CD8-positive, alpha-beta T cell (primary cell): ENCODE measurements at regions of chr19 and their contacts with region 1.

Region 1: DNA sequence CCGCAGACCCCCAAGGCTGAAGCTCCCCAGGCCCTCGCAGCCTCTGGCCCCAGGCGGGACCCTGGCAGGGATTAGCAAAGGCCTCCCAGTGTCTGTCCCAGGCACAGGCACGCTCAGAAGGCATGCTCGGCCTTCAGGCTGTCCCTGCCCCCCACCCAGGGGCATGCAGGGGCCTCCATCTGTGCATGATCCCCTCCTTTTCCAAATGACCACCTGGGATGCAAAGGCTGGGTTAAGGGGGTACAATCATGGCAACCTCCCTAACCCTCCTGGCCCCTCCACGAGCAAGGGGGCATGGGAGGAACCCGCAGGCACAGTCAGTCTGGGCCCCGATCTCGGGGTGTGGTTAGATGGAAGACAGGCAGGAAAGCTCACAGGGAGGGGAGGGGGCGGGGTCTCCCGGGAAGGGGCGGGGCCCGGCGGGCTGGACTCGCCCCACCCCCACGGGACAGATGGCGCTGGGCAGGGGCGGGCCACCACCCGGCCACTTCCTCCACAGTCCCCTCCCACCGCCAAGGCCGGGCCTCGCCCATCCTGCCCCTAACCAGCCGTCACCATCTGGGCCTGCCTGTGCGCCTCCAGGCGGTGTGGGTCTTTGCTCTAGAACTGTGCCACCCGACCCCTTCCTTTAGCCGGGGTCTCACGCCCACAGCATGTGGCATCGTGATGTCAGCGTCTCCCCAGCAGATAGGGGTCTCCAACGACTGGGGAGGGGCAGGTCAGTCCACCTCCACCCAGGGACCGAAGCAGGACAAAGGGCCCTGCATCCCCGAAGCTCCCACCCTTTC is 7.0 kb upstream of the REXO1 start:
- DNase-seq: peak; percentile 55 to 92 (median 78)
- ATAC-seq: peak; percentile 52
- H3K4me3 ChIP-seq: peak overlapping the region; percentile 66 to 85
- H3K4me3 Mint-ChIP-seq: peak overlapping the region; percentile 83
- H3K27ac ChIP-seq: peak overlapping the region; percentile 89 to 93
- H3K27ac Mint-ChIP-seq: peak overlapping the region; percentile 90
- H3K4me1 ChIP-seq: peaks cover 91% of the 10 kb centered on the region
- H3K4me1 Mint-ChIP-seq: peaks cover 52% of the 10 kb centered on the region
- H3K27me3 ChIP-seq: no peaks in the 10 kb centered on the region
- H3K27me3 Mint-ChIP-seq: no peaks in the 10 kb centered on the region
- CTCF ChIP-seq: no peak

Region 2: GRCh38 chr19:1875646-1876495 is 20.6 kb after region 1 on chr19:
- CTCF ChIA-PET with region 1: interaction called, 3 read pairs
- POLR2A ChIA-PET with region 1: interaction called, 16 read pairs
- intact Hi-C with region 1: no loop called
- DNase-seq: peak; percentile 70 to 93 (median 87)
- ATAC-seq: peak; percentile 84
- H3K4me3 ChIP-seq: peak overlapping the region; percentile 82 to 98
- H3K4me3 Mint-ChIP-seq: peak overlapping the region; percentile 99
- H3K27ac ChIP-seq: peak overlapping the region; percentile 90 to 95
- H3K27ac Mint-ChIP-seq: peak overlapping the region; percentile 98
- H3K4me1 ChIP-seq: peaks cover 43% of the 10 kb centered on the region
- H3K4me1 Mint-ChIP-seq: peaks cover 31% of the 10 kb centered on the region
- H3K27me3 ChIP-seq: no peaks in the 10 kb centered on the region
- H3K27me3 Mint-ChIP-seq: no peaks in the 10 kb centered on the region
- CTCF ChIP-seq: no peak